GM10248 (cell line): ENCODE measurements at regions of chr17 and their contacts with region 1.

Region 1: GRCh38 chr17:40437095-40437732 is 6.0 kb upstream of the IGFBP4 start:
- DNase-seq: no peak
- CTCF ChIP-seq: no peak

Region 2: DNA sequence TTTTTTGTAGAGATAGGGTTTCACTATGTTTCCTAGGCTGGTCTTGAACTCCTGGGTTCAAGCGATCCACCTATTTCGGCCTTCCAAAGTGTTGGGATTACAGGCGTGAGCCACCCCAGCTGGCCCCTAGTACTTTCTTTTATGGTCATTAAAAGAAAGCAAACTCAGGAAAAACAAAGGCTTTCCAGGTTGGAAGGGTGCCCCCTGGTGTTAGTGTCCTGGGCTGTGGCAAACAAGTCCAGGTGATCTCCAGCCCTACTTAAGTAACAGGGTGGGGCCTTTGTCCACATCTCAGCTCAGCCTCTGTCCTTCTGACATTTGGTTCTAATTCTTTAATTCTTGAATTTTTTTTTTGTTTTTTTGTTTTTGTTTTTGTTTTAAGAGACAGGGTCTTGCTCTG is 13.0 kb after region 1 on chr17:
- CTCF ChIA-PET with region 1: interaction called, 12 read pairs
- POLR2A ChIA-PET with region 1: no interaction called
- DNase-seq: peak; percentile 52
- CTCF ChIP-seq: peak; percentile 32

Region 3: GRCh38 chr17:40469805-40470675 is 32.8 kb after region 1 on chr17:
- CTCF ChIA-PET with region 1: no interaction called
- POLR2A ChIA-PET with region 1: no interaction called
- DNase-seq: no peak
- CTCF ChIP-seq: no peak